ENCODE measurements at regions of chr12 and their contacts with region 1.

Region 1: DNA sequence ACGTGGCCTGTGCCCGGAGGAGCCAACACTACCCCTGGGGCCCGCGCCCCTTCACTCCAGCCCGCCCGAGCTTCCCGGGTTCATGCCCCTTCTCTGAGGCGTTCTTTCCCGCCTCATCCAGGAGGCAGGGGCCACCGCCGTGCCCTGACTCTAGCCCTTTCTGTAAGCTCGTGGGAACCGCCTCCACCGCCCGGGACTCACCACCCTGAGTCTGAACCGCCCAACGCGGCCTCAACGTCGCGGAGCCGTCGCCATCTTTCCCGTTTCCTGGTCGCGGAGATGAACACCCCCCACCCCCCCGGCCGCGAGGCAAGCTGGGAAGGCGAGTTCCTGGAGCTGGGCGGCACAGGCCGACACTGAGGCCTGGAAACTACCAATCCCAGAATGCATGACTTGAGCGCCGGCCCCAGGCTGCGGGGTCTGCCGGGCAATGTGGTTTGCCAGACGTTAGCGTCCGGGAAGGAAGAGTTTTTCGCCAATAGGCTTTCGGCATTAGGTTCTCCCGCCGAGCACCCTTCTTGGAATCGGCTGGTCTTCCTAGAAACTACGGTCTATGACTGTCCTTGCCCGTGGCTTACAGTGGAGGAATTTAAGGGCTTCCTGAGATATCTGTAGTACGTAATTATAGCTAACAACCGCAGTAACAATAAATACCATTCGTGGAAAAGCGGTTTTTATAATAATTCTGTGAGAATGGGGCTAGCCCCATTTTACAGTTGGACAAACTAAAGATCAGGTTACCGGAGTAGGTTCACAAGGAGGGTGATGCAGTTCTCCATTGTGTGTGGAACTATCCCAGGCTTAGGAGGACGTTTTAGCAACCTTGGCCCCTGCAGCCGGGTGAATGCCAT is at the start of gene DDX23:
- DNase-seq: peak; percentile 88
- ATAC-seq: peak; percentile 99
- H3K4me3 ChIP-seq: peak within 1 kb of the TSS; percentile 96 to 98
- H3K27ac ChIP-seq: peak within 1 kb of the TSS; percentile 97
- H3K4me1 ChIP-seq: peaks cover 14% of the 10 kb centered on the region
- H3K27me3 ChIP-seq: no peaks in the 10 kb centered on the region
- CTCF ChIP-seq: no peak
- total RNA-seq, gene DDX23: 130 TPM

Region 2: GRCh38 chr12:47422611-47423010 is 1429.5 kb before region 1 on chr12:
- CTCF ChIA-PET with region 1: no interaction called
- POLR2A ChIA-PET with region 1: interaction called, 10 read pairs
- in situ Hi-C with region 1: no loop called
- intact Hi-C with region 1: no loop called
- DNase-seq: no peak
- ATAC-seq: no peak
- H3K4me3 ChIP-seq: no peak overlapping the region
- H3K27ac ChIP-seq: no peak overlapping the region
- H3K4me1 ChIP-seq: no peaks in the 10 kb centered on the region
- H3K27me3 ChIP-seq: no peaks in the 10 kb centered on the region; the same call in 1 of the 2 replicates
- CTCF ChIP-seq: no peak

Region 3: GRCh38 chr12:47896633-47897032 is 955.5 kb before region 1 on chr12:
- CTCF ChIA-PET with region 1: no interaction called
- POLR2A ChIA-PET with region 1: interaction called, 12 read pairs
- in situ Hi-C with region 1: no loop called
- intact Hi-C with region 1: no loop called
- DNase-seq: no peak
- ATAC-seq: peak; percentile 72
- H3K4me3 ChIP-seq: peak overlapping the region in 1 of 2 experiments; percentile 9; a peak in 1 of 4 replicates
- H3K27ac ChIP-seq: no peak overlapping the region
- H3K4me1 ChIP-seq: peaks cover 8% of the 10 kb centered on the region
- H3K27me3 ChIP-seq: no peaks in the 10 kb centered on the region
- CTCF ChIP-seq: no peak

Region 4: GRCh38 chr12:48890657-48891418 is 38.7 kb after region 1 on chr12:
- CTCF ChIA-PET with region 1: interaction called, 55 read pairs
- POLR2A ChIA-PET with region 1: interaction called, 9 read pairs
- in situ Hi-C with region 1: no loop called
- intact Hi-C with region 1: loop called (anchors 1 kb)
- DNase-seq: peak; percentile 35
- ATAC-seq: peak; percentile 99
- H3K4me3 ChIP-seq: peak overlapping the region; percentile 18 to 26; a peak in 2 of 4 replicates
- H3K27ac ChIP-seq: no peak overlapping the region
- H3K4me1 ChIP-seq: no peaks in the 10 kb centered on the region
- H3K27me3 ChIP-seq: peaks cover 4% of the 10 kb centered on the region
- CTCF ChIP-seq: peak; percentile 97

Region 5: DNA sequence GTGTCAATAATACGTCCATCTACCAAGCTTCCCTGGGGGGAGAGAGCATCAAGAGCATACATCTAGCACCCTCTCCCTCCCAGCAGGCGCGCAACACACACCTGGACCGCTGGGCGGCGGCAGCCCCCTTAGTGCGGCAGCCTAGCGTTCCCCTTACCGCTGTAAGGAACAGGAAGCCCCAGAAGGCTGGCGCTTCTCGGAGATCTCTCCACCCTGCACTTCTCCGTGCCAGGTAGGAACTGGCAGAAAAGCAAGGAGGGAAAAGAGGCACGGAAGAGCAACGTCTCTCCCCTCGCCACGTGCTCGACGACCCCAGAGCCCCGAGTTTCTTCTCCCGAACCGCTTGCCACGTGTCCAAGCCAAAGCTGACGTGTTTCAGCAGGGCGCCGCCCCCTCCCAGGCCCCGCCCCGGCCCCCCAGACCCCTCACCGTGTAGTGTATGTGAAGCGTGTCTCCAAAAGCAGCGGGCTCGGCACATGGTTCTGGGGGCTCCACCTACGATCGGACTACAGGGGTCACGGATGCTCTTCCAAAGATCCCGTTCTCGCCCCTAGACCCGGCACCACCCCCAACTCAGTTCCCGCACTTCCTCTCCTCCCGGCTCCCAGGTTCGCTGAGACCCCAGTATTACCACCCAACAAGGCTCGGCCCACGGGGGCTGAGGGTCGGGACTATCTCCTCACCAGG is 72.7 kb after region 1 on chr12:
- CTCF ChIA-PET with region 1: no interaction called
- POLR2A ChIA-PET with region 1: interaction called, 10 read pairs
- in situ Hi-C with region 1: no loop called
- intact Hi-C with region 1: no loop called
- DNase-seq: no peak
- ATAC-seq: peak; percentile 72
- H3K4me3 ChIP-seq: peak overlapping the region; percentile 40
- H3K27ac ChIP-seq: no peak overlapping the region
- H3K4me1 ChIP-seq: no peaks in the 10 kb centered on the region
- H3K27me3 ChIP-seq: no peaks in the 10 kb centered on the region
- CTCF ChIP-seq: no peak; the same call in 1 of the 2 replicates

Region 6: DNA sequence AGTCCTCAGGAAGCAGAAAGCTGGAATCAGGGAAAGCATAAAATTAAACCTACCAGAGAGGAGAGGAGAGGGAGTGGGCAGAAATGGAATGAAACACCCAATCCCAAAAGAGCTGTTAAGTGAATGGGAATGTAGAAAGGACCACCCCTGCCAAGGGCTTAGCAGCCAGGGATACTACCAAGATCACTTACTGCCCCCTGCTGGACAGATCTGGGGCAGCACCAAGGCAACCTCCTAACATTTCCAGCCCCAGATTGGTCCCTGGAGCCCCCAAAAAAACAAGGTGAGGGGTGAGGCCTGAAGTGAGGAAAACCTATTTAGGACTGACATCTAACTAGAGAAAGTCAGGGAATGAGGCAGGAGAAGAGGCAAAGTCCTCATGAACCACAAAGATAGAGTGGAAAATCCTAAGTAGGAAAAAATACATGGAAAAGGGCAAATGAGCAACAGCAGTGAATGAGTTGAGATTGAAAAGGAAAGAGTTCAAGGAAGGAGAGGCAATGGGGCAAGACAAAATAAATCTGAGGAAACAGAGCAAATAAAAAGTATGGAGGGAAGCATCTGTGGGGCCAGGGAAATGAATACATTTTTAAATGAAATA is 84.4 kb after region 1 on chr12:
- CTCF ChIA-PET with region 1: interaction called, 3 read pairs
- POLR2A ChIA-PET with region 1: no interaction called
- in situ Hi-C with region 1: no loop called
- intact Hi-C with region 1: loop called (anchors 1 kb)
- DNase-seq: no peak
- ATAC-seq: peak; percentile 66; the same call in 1 of the 2 replicates
- H3K4me3 ChIP-seq: no peak overlapping the region
- H3K27ac ChIP-seq: no peak overlapping the region
- H3K4me1 ChIP-seq: no peaks in the 10 kb centered on the region
- H3K27me3 ChIP-seq: no peaks in the 10 kb centered on the region
- CTCF ChIP-seq: peak; percentile 95

Region 7: GRCh38 chr12:48995061-48995879 is 143.2 kb after region 1 on chr12:
- CTCF ChIA-PET with region 1: interaction called, 6 read pairs
- POLR2A ChIA-PET with region 1: interaction called, 3 read pairs
- in situ Hi-C with region 1: no loop called
- intact Hi-C with region 1: loop called (anchors 2 kb)
- DNase-seq: peak; percentile 48
- ATAC-seq: peak; percentile 77
- H3K4me3 ChIP-seq: peak overlapping the region; percentile 26 to 50
- H3K27ac ChIP-seq: no peak overlapping the region
- H3K4me1 ChIP-seq: peaks cover 12% of the 10 kb centered on the region
- H3K27me3 ChIP-seq: no peaks in the 10 kb centered on the region
- CTCF ChIP-seq: peak; percentile 95

Measured in Panc1 (cell line).